Caco-2 (cell line): ENCODE measurements at regions of chr3 and their contacts with region 1.

Region 1: GRCh38 chr3:61561374-61562041 is at the start of gene PTPRG:
- DNase-seq: peak; percentile 87 to 88
- H3K4me3 ChIP-seq: peak within 1 kb of the TSS; percentile 87
- H3K4me3 Mint-ChIP-seq: peak within 1 kb of the TSS; percentile 86
- H3K27ac Mint-ChIP-seq: peak within 1 kb of the TSS; percentile 85
- H3K4me1 ChIP-seq: peaks cover 8% of the 10 kb centered on the region
- H3K4me1 Mint-ChIP-seq: peaks cover 6% of the 10 kb centered on the region
- H3K27me3 ChIP-seq: no peaks in the 10 kb centered on the region
- H3K27me3 Mint-ChIP-seq: no peaks in the 10 kb centered on the region
- CTCF ChIP-seq: no peak
- total RNA-seq, gene PTPRG: 46.4 and 46.5 TPM in 2 replicates

Region 2: DNA sequence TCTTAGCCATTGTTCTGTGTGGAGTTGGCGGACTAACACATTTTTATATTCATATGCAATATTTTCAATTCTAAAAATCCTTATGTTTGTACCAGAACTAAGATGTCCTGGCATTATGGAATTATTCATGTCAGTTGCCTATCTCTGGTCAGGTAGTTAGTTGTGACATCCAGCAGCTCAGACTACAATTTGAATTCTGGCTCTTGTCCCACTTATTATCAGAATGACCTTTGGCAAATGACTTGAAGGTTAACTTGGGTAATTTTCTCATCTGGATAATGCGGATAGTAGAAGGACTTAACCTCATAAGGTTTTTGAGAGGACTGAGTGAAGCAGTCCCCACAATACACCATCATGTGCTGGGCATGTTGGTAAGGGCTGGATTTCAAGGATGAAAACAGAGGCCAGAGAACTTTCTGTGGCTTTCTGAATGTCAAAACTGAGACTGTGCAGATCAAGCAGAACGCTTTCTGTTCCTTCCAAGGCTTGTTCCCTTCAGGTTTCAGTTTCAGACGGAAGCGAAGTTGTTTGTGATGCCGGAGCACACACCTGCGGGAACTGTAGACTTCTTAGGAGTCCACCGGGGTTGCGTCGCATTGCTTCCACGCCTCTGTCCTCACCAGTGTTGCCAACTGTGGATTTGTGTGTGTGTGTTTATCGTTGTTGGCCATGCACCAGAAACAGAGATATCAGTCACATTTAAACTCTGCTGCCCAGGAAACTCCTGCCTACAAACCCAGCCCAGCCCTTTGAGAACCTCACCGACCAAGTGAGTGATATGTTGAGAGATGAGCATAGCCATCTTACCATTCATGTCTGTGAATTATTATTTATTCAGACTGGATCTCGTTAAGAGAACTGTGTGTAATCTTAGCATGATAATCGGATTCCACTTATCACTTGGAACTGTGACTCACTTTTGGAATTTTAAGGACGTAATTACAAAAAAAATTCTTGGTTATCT is 75.9 kb after region 1 on chr3:
- CTCF ChIA-PET with region 1: no interaction called
- POLR2A ChIA-PET with region 1: no interaction called
- intact Hi-C with region 1: loop called (anchors 2 kb)
- DNase-seq: peak; percentile 28 to 53
- H3K4me3 ChIP-seq: peak overlapping the region; percentile 32
- H3K4me3 Mint-ChIP-seq: peak overlapping the region; percentile 73
- H3K27ac Mint-ChIP-seq: peak overlapping the region; percentile 72
- H3K4me1 ChIP-seq: peaks cover 42% of the 10 kb centered on the region
- H3K4me1 Mint-ChIP-seq: peaks cover 7% of the 10 kb centered on the region
- H3K27me3 ChIP-seq: no peaks in the 10 kb centered on the region
- H3K27me3 Mint-ChIP-seq: no peaks in the 10 kb centered on the region
- CTCF ChIP-seq: no peak

Region 3: DNA sequence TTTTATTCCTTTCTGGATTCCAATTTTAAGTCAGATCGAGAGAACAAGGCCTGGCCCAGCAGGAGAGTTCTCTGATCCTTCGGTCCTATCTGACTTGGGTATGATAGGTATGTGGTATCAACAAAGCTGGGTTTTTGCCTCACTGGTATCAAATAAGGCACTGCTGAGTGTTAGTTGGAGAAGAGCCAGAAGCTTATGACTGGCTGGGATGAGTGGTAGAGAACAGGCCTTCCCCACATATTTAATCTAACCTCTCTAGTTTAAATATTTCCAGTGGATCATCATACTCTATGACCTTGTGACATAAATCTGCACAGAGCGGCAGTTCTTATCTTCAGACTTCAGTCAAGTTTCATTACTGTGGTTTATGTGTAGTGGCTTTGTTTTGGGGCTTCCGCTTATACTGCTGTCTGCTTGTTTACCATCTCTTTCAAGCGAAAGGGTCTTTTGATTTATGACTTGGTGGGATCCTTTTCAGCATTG is 164.4 kb after region 1 on chr3:
- CTCF ChIA-PET with region 1: no interaction called
- POLR2A ChIA-PET with region 1: no interaction called
- intact Hi-C with region 1: loop called (anchors 5 kb)
- DNase-seq: peak; percentile 39 to 51
- H3K4me3 ChIP-seq: no peak overlapping the region
- H3K4me3 Mint-ChIP-seq: peak overlapping the region; percentile 17
- H3K27ac Mint-ChIP-seq: peak overlapping the region; percentile 37
- H3K4me1 ChIP-seq: peaks cover 50% of the 10 kb centered on the region
- H3K4me1 Mint-ChIP-seq: peaks cover 47% of the 10 kb centered on the region
- H3K27me3 ChIP-seq: no peaks in the 10 kb centered on the region
- H3K27me3 Mint-ChIP-seq: no peaks in the 10 kb centered on the region
- CTCF ChIP-seq: no peak

Region 4: DNA sequence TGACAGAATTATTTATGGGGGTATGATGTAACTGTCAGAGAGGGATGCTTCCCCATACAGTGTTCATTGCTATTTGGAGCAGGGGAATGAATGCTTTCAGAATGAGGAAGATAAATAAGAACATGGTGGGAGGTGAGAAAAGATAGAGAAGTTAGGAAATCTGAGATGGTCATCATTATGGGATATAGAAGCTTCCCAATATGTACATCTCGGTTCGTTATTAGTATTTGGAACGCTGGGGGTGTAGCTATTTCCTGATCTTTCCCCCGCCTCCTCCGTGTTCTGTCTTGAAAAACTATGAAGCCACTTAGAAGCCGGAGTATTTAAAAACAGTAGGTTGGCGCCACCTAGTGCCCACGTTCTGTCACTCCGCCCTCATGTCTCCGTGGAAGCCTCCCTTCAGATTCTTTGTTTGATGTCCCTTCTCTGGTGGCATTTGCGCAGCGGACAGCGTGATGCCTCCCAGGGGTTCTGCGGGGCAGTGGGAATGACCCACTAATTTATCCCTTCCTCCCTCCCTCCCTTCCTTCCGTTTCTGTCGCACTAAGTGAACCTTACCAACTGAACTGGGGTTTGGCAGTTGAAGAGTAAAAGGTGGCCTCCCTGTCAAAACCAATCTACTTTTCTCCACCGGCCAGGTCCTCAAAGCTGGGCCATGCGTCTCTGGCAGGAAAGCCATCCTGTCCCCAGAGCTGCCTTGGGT is 627.3 kb after region 1 on chr3:
- CTCF ChIA-PET with region 1: interaction called, 4 read pairs
- POLR2A ChIA-PET with region 1: no interaction called
- intact Hi-C with region 1: loop called (anchors 1 kb)
- DNase-seq: peak; percentile 65 to 67
- H3K4me3 ChIP-seq: no peak overlapping the region
- H3K4me3 Mint-ChIP-seq: peak overlapping the region; percentile 50
- H3K27ac Mint-ChIP-seq: no peak overlapping the region
- H3K4me1 ChIP-seq: no peaks in the 10 kb centered on the region; the same call in 1 of the 2 replicates
- H3K4me1 Mint-ChIP-seq: peaks cover 17% of the 10 kb centered on the region
- H3K27me3 ChIP-seq: no peaks in the 10 kb centered on the region
- H3K27me3 Mint-ChIP-seq: no peaks in the 10 kb centered on the region
- CTCF ChIP-seq: peak; percentile 65 to 73